IMR-90 (cell line): ENCODE measurements at regions of chr6 and their contacts with region 1.

Region 1: GRCh38 chr6:132401120-132401945 is at the start of gene MOXD1:
- DNase-seq: peak; percentile 37
- ATAC-seq: peak; percentile 90
- H3K4me3 ChIP-seq: peak within 1 kb of the TSS; percentile 93
- H3K27ac ChIP-seq: peak within 1 kb of the TSS; percentile 45
- H3K4me1 ChIP-seq: peaks cover 2% of the 10 kb centered on the region; the same call in 1 of the 2 replicates
- H3K27me3 ChIP-seq: peaks cover 4% of the 10 kb centered on the region; the same call in 1 of the 2 replicates
- CTCF ChIP-seq: 0 out of 2 replicates have a peak, but pooled peaks have one; percentile 7
- POLR2A ChIP-seq: no peak
- RAD21 ChIP-seq: no peak; the same call in 1 of the 2 replicates
- total RNA-seq, gene MOXD1: 10.0 and 10.6 TPM in 2 replicates

Region 2: DNA sequence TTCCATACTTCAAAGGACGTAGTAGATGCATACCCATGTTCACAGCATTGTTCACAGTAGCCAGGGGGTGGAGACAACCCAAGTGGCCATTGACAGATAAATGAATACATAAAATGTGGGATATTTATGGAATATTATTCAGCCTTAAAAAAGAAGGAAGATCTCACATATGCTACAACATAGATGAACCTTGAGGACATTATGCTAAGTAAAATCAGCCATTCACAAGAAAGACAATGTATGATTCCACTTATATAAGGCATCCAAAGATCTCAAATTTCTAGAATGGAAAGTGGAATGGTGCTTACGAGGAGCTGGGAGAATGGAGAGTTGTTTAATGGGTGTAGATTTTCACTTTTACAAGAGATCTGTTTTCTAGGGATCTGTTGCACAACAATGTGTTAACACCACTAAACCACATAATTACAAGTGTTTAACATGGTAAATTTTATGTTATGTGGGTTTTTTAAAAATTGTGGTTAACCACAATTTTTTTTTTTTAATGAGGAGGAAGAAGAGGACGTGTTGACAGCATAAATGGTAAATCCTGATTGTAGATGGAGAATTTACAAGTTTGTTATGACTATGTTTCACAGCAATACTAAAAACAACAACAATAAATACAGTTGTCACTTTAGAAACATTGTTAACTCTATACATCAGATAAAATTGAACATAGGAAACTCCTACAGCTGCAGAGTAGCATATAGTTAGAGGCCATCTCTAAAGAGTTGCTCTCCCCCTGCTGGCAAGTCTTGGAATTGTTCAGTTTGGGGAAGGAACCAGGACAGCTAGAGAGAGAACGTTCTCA is 491.7 kb before region 1 on chr6:
- CTCF ChIA-PET with region 1: no interaction called
- POLR2A ChIA-PET with region 1: no interaction called
- dilution Hi-C with region 1: no loop called
- in situ Hi-C with region 1: no loop called
- intact Hi-C with region 1: no loop called
- DNase-seq: peak; percentile 72
- ATAC-seq: peak; percentile 89
- H3K4me3 ChIP-seq: no peak overlapping the region
- H3K27ac ChIP-seq: no peak overlapping the region
- H3K4me1 ChIP-seq: peaks cover 3% of the 10 kb centered on the region
- H3K27me3 ChIP-seq: no peaks in the 10 kb centered on the region
- CTCF ChIP-seq: peak; percentile 86
- POLR2A ChIP-seq: no peak
- RAD21 ChIP-seq: peak; percentile 86

Region 3: DNA sequence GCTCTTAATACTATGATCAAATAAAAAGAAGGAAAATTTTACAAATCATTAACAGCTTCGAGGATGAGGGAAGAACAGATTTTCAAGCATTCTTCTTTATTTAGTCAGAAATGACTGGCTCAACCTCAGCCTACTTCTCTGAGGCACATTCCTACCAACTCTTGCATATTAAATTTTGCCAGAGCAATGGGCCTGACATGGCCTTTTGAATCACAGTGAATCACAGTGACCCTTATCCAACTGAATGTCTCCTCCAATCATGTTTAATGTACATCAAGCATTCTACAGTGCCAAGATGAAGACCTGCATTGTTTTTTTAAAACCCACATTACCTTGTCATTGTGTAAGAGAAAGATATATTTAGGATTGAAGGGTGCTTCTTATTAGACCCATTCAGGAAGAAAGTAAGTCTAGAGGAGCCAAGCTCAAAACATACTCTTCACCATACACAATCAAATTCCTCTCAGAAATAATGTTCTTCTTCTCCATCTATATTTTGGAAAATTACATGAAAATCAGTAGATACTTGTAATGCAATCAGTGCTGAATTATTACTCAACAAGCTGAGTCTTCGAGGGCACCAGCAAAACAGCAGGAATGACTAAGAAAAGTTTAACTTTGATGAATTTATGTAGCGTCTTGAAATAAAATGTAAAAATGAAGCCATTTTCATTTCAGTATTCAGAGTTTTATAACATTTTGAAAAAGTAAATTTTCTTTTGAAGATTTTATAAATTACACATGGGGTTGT is 44.0 kb after region 1 on chr6:
- CTCF ChIA-PET with region 1: no interaction called
- POLR2A ChIA-PET with region 1: no interaction called
- dilution Hi-C with region 1: no loop called
- in situ Hi-C with region 1: no loop called
- intact Hi-C with region 1: loop called (anchors 2 kb)
- DNase-seq: peak; percentile 88
- ATAC-seq: peak; percentile 98
- H3K4me3 ChIP-seq: no peak overlapping the region
- H3K27ac ChIP-seq: no peak overlapping the region
- H3K4me1 ChIP-seq: 0 out of 2 replicates have a peak, but pooled peaks cover 2% of the 10 kb centered on the region
- H3K27me3 ChIP-seq: no peaks in the 10 kb centered on the region
- CTCF ChIP-seq: no peak
- POLR2A ChIP-seq: no peak
- RAD21 ChIP-seq: no peak